ENCODE measurements at regions of chr20 and their contacts with region 1.

Region 1: DNA sequence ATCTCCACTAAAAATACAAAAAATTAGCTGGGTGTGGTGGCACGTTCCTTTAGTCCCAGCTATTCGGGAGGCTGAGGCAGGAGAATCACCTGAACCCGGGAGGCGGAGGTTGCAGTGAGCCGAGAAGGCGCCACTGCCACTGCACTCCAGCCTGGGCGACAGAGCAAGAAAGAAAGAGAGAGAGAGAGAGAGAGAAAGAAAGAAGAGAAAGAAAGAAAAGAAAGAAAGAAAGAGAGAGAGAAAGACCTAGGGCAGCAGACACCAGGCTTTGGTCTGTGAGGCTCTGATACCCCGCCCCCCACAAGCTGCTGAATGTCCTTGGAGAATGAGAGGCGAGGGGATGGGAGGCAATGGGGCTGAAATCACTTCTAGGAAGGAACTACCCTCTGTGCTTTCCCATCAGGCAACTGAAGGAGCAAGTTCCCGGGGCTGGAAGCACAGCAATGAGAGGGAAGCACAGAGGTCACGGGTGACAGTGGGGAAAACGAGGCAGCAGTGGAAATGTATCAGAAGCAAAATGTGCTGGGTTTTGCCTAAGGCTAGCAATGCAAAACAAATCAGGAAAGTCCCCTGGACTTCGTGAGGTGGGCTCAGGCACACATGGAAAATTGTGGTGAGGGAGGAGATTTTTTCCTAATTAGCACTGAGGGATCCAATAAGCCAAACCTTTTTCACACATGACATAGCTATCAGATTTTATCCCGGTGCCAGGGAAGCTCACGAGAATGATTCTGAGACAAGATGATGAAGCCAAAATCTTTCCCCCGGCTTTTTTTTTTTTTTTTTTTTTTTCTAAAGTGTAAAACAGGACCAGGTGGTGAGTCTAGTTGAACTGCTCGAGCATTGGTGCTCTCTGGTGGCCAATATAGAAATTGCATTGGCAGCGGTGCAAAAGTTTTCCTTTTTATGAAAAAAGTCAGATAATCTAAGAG is 16.9 kb upstream of the ARFGEF2 start:
- DNase-seq: peak; percentile 54 to 80 (median 74)
- ATAC-seq: peak; percentile 87
- H3K4me3 ChIP-seq: no peak overlapping the region
- H3K4me3 Mint-ChIP-seq: no peak overlapping the region
- H3K27ac ChIP-seq: no peak overlapping the region
- H3K27ac Mint-ChIP-seq: no peak overlapping the region
- H3K4me1 ChIP-seq: peaks cover 4% of the 10 kb centered on the region
- H3K4me1 Mint-ChIP-seq: peaks cover 6% of the 10 kb centered on the region
- H3K27me3 ChIP-seq: no peaks in the 10 kb centered on the region
- H3K27me3 Mint-ChIP-seq: no peaks in the 10 kb centered on the region
- CTCF ChIP-seq: peak; percentile 84

Region 2: DNA sequence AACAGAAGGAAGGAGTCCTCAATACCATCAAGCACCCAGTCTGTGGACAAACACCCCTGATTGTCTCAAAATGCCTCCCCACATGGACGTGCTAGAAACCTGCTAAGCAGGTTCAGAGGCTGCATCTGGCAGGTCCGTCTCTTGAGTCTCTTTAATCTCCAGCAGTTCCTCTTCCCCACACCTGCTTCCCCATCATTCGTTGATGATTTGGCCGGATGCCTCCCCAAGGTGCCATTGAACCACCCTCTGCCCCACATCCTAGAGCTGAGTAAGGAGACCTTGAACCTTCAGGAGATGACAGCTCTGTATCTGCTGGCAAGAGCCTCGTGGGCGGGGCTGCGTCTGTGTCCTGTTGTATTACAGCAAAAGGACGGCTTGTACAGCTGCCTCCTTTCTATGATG is 256.1 kb before region 1 on chr20:
- CTCF ChIA-PET with region 1: interaction called, 204 read pairs
- POLR2A ChIA-PET with region 1: no interaction called
- intact Hi-C with region 1: no loop called
- DNase-seq: no peak
- ATAC-seq: no peak
- H3K4me3 ChIP-seq: no peak overlapping the region
- H3K4me3 Mint-ChIP-seq: no peak overlapping the region
- H3K27ac ChIP-seq: no peak overlapping the region
- H3K27ac Mint-ChIP-seq: no peak overlapping the region
- H3K4me1 ChIP-seq: no peaks in the 10 kb centered on the region
- H3K4me1 Mint-ChIP-seq: no peaks in the 10 kb centered on the region
- H3K27me3 ChIP-seq: no peaks in the 10 kb centered on the region
- H3K27me3 Mint-ChIP-seq: no peaks in the 10 kb centered on the region
- CTCF ChIP-seq: no peak

Region 3: DNA sequence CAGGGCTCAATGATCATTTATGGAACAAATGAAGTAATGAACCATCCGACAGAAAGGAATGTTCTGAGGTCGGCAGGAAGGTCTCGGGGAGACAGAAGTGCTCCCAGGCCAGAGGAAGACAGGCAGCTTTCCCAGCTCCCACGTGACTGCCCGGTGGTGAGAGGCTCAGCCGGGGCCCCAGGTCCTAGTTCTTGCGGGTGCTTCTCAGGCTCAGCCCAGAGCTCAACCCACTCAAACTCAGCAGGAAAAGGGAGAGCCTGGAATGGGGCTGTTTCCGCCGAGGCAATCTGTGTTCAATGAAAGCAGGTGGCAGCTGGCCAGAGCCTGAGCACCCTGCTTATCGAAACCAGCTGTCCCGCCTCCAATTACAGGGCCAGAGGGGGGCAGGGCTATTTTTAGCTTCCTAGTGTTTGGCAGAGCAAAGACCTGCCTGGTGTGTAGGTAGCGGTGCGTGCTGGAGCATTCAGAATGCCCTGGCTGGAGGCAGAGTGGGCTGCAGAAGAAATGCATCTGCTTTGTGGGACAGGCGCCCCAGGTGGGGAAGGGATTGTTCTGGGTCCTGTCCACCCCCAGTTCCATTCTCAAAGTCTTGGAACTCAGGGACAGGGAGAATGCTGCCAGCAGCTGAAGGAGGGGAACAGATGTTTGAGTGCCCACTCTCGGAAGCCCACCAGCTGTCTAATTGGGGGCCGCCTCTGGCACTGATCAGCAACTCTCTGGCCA is 221.9 kb before region 1 on chr20:
- CTCF ChIA-PET with region 1: interaction called, 17 read pairs
- POLR2A ChIA-PET with region 1: no interaction called
- intact Hi-C with region 1: no loop called
- DNase-seq: no peak
- ATAC-seq: no peak
- H3K4me3 ChIP-seq: no peak overlapping the region
- H3K4me3 Mint-ChIP-seq: no peak overlapping the region
- H3K27ac ChIP-seq: no peak overlapping the region
- H3K27ac Mint-ChIP-seq: peak overlapping the region; percentile 13
- H3K4me1 ChIP-seq: no peaks in the 10 kb centered on the region
- H3K4me1 Mint-ChIP-seq: peaks cover 1% of the 10 kb centered on the region
- H3K27me3 ChIP-seq: no peaks in the 10 kb centered on the region
- H3K27me3 Mint-ChIP-seq: no peaks in the 10 kb centered on the region
- CTCF ChIP-seq: no peak

Region 4: GRCh38 chr20:48718857-48719578 is 185.6 kb before region 1 on chr20:
- CTCF ChIA-PET with region 1: interaction called, 8 read pairs
- POLR2A ChIA-PET with region 1: no interaction called
- intact Hi-C with region 1: loop called in 1 of 2 experiments (anchors 5 kb)
- DNase-seq: peak in 8 of 9 experiments; percentile 31 to 77 (median 60)
- ATAC-seq: peak; percentile 46
- H3K4me3 ChIP-seq: no peak overlapping the region
- H3K4me3 Mint-ChIP-seq: peak overlapping the region; percentile 66
- H3K27ac ChIP-seq: peak overlapping the region in 1 of 2 experiments; percentile 60
- H3K27ac Mint-ChIP-seq: peak overlapping the region; percentile 92
- H3K4me1 ChIP-seq: peaks cover 98% of the 10 kb centered on the region
- H3K4me1 Mint-ChIP-seq: peaks cover 95% of the 10 kb centered on the region
- H3K27me3 ChIP-seq: no peaks in the 10 kb centered on the region
- H3K27me3 Mint-ChIP-seq: no peaks in the 10 kb centered on the region
- CTCF ChIP-seq: no peak

Region 5: GRCh38 chr20:48725226-48725991 is 179.2 kb before region 1 on chr20:
- CTCF ChIA-PET with region 1: interaction called, 14 read pairs
- POLR2A ChIA-PET with region 1: no interaction called
- intact Hi-C with region 1: loop called (anchors 1 kb)
- DNase-seq: no peak
- ATAC-seq: no peak
- H3K4me3 ChIP-seq: no peak overlapping the region
- H3K4me3 Mint-ChIP-seq: no peak overlapping the region
- H3K27ac ChIP-seq: no peak overlapping the region
- H3K27ac Mint-ChIP-seq: peak overlapping the region; percentile 73
- H3K4me1 ChIP-seq: peaks cover 52% of the 10 kb centered on the region
- H3K4me1 Mint-ChIP-seq: peaks cover 68% of the 10 kb centered on the region
- H3K27me3 ChIP-seq: no peaks in the 10 kb centered on the region
- H3K27me3 Mint-ChIP-seq: no peaks in the 10 kb centered on the region
- CTCF ChIP-seq: no peak

Region 6: GRCh38 chr20:49078296-49078695 is 173.7 kb after region 1 on chr20:
- CTCF ChIA-PET with region 1: no interaction called
- POLR2A ChIA-PET with region 1: no interaction called
- intact Hi-C with region 1: no loop called
- DNase-seq: no peak
- ATAC-seq: no peak
- H3K4me3 ChIP-seq: no peak overlapping the region
- H3K4me3 Mint-ChIP-seq: no peak overlapping the region
- H3K27ac ChIP-seq: no peak overlapping the region
- H3K27ac Mint-ChIP-seq: no peak overlapping the region
- H3K4me1 ChIP-seq: no peaks in the 10 kb centered on the region
- H3K4me1 Mint-ChIP-seq: no peaks in the 10 kb centered on the region
- H3K27me3 ChIP-seq: no peaks in the 10 kb centered on the region
- H3K27me3 Mint-ChIP-seq: no peaks in the 10 kb centered on the region
- CTCF ChIP-seq: no peak

Measured in CD8-positive, alpha-beta T cell (primary cell).